Panc1 (cell line): ENCODE measurements at regions of chr16 and their contacts with region 1.

Region 1: DNA sequence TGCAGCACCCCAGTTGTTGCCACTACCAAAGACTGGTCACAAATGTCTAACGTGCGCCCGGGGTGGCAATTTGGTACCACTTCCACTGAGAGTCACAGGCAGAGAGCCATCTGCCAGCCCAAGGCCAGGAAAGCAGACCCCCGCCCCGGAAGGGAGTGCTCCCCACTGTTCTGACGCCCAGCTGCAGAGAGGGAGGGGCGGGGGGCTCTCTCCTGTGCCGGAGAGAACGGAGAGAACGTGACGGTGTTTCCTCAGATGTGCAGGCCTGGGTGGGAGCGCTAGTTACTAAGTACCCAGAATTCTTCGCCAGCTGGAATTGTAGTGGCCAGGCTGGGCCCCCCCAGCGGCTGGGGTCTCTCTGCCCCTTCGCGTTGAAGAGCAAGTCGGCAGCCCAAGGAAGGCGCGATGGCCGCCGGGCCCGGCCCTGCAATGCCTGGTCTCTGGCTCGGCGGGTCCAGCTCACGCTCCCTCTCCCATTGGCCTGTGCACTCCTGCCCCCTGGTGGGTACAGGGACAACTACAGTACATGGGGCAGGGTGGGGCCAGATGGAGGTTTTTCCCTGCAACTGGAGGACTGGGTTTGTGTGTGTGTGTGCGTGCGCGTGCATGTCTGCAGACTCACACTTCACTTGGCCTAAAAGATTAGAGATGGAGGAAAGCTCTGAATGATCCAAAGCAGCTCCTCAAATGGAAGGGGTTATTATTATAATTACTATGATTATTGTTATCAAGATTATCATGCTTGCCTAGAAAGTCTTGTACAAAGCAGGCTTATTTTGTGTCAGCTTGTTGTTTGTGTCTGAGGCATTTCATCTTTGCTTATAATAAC is 107.1 kb downstream of the AMFR start:
- DNase-seq: peak; percentile 35
- ATAC-seq: peak; percentile 97
- H3K4me3 ChIP-seq: no peak overlapping the region
- H3K27ac ChIP-seq: no peak overlapping the region
- H3K4me1 ChIP-seq: no peaks in the 10 kb centered on the region; the same call in 1 of the 2 replicates
- H3K27me3 ChIP-seq: no peaks in the 10 kb centered on the region
- CTCF ChIP-seq: peak; percentile 88

Region 2: GRCh38 chr16:55944377-55944802 is 373.8 kb before region 1 on chr16:
- CTCF ChIA-PET with region 1: no interaction called
- POLR2A ChIA-PET with region 1: no interaction called
- in situ Hi-C with region 1: no loop called
- intact Hi-C with region 1: loop called (anchors 10 kb)
- DNase-seq: peak; percentile 50
- ATAC-seq: peak; percentile 91
- H3K4me3 ChIP-seq: no peak overlapping the region
- H3K27ac ChIP-seq: no peak overlapping the region
- H3K4me1 ChIP-seq: no peaks in the 10 kb centered on the region
- H3K27me3 ChIP-seq: peaks cover 4% of the 10 kb centered on the region
- CTCF ChIP-seq: peak; percentile 92

Region 3: GRCh38 chr16:56041686-56042085 is 276.5 kb before region 1 on chr16:
- CTCF ChIA-PET with region 1: no interaction called
- POLR2A ChIA-PET with region 1: no interaction called
- in situ Hi-C with region 1: no loop called
- intact Hi-C with region 1: loop called (anchors 5 kb)
- DNase-seq: no peak
- ATAC-seq: peak; percentile 93
- H3K4me3 ChIP-seq: no peak overlapping the region
- H3K27ac ChIP-seq: no peak overlapping the region
- H3K4me1 ChIP-seq: no peaks in the 10 kb centered on the region
- H3K27me3 ChIP-seq: no peaks in the 10 kb centered on the region
- CTCF ChIP-seq: peak; percentile 60

Region 4: DNA sequence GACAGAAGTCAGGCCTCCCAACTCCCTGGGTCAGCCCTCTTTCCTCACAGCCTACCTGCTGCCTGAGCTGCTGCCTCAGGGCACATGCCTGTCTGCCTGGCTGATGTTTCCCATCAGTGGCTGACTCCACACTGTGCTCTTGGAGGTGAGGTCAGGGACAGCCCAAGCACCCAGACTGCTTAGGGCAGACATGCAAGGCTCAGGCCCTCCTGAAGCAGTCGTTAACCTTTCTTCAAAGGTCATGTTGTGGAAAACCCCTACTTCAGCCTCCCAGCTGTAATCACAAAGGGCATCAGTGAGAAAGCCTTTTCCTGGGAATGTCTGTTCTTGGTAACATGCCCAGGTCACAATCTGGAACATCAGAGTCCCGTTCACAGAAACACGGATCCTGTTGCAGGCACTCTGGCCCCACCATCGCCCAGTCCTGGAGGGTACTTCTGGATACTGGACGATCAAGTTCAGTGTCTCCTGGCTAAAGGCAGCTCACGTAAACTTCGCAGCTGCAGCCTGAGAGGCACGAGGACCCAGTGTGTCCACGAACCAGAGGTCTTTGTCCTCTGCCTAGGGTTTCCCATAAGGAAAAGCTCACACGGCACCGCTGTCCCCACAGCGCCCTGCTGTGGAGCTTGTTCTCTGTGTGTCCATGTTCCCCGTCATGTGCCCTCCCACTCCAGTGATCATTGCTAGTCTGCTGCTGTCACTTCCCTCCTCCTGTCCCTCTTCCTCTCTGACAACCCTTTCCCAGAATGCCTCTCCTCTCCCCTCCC is 72.0 kb before region 1 on chr16:
- CTCF ChIA-PET with region 1: no interaction called
- POLR2A ChIA-PET with region 1: no interaction called
- in situ Hi-C with region 1: no loop called
- intact Hi-C with region 1: no loop called
- DNase-seq: peak; percentile 32
- ATAC-seq: peak; percentile 95
- H3K4me3 ChIP-seq: peak overlapping the region in 1 of 2 experiments; percentile 24; a peak in 2 of 4 replicates
- H3K27ac ChIP-seq: peak overlapping the region; percentile 86
- H3K4me1 ChIP-seq: peaks cover 32% of the 10 kb centered on the region
- H3K27me3 ChIP-seq: no peaks in the 10 kb centered on the region
- CTCF ChIP-seq: peak; percentile 25

Region 5: DNA sequence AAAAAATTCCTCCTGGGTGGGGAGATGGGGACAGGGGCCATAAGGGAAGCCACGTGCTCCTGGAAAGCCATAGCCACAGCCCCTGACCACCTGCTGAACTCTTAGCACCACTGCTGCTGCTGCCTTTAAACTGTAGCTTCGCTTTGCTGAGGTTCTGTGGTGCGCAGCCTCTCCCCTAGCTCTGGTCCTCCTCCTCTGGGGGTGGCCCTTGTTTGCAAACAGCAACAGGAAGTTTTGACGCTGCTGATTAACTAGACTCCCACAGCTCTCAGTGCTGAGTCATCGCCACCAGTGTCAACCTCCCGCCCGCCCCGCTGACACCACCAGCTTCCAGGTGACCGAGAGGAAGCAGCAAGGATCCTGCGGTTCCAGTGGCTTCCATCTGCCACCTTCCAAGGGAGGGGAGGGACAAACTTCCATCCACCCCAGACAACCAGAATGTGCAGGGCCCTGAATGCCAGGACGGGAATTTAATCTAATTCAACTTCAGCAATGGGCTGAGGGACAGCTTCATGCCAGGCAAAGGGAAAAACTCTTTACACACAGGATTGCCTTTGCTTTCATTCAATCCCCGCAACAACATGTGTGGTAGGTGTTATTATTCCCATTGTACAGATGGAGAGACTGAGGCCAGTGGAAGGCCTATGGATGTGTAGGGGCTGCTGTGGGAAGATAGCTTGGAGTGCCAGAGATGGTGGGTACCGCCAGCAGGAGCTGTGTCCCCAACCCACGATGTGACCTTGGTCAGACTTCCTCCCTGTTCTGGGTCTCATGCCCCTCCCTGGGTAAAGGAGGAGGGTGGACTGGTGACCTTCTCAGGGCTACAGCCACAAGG is 1492.2 kb after region 1 on chr16:
- CTCF ChIA-PET with region 1: no interaction called
- POLR2A ChIA-PET with region 1: no interaction called
- in situ Hi-C with region 1: no loop called
- intact Hi-C with region 1: no loop called
- DNase-seq: peak; percentile 71
- ATAC-seq: peak; percentile 88
- H3K4me3 ChIP-seq: peak overlapping the region in 1 of 2 experiments; percentile 18; a peak in 1 of 4 replicates
- H3K27ac ChIP-seq: peak overlapping the region; percentile 74
- H3K4me1 ChIP-seq: peaks cover 40% of the 10 kb centered on the region
- H3K27me3 ChIP-seq: no peaks in the 10 kb centered on the region
- CTCF ChIP-seq: no peak